Gastrocnemius medialis (tissue), 4 donors: ENCODE measurements at regions of chr3 and their contacts with region 1.

Region 1: GRCh38 chr3:47420511-47421484 is 40.0 kb downstream of the PTPN23 start:
- DNase-seq: peak; percentile 58 to 83
- ATAC-seq: peak; percentile 79 to 87
- H3K4me3 ChIP-seq: no peak overlapping the region
- H3K27ac ChIP-seq: peak overlapping the region; percentile 41 to 78 (median 62)
- H3K4me1 ChIP-seq: peaks cover 10% of the 10 kb centered on the region in 2 donors
- H3K27me3 ChIP-seq: no peaks in the 10 kb centered on the region
- CTCF ChIP-seq: peak; percentile 86 to 94 (median 91)
- POLR2A ChIP-seq: no peak

Region 2: GRCh38 chr3:47469616-47470015 is 48.8 kb after region 1 on chr3:
- in situ Hi-C with region 1: loop called in 3 of 4 experiments (anchors 5 to 10 kb)
- intact Hi-C with region 1: no loop called
- DNase-seq: no peak
- ATAC-seq: no peak
- H3K4me3 ChIP-seq: no peak overlapping the region
- H3K27ac ChIP-seq: peak overlapping the region in 2 of 4 donors; percentile 37 to 47
- H3K4me1 ChIP-seq: peaks cover 19 to 30% of the 10 kb centered on the region in 2 donors
- H3K27me3 ChIP-seq: no peaks in the 10 kb centered on the region
- CTCF ChIP-seq: no peak
- POLR2A ChIP-seq: no peak